A673 (cell line): ENCODE measurements at regions of chr10 and their contacts with region 1.

Region 1: DNA sequence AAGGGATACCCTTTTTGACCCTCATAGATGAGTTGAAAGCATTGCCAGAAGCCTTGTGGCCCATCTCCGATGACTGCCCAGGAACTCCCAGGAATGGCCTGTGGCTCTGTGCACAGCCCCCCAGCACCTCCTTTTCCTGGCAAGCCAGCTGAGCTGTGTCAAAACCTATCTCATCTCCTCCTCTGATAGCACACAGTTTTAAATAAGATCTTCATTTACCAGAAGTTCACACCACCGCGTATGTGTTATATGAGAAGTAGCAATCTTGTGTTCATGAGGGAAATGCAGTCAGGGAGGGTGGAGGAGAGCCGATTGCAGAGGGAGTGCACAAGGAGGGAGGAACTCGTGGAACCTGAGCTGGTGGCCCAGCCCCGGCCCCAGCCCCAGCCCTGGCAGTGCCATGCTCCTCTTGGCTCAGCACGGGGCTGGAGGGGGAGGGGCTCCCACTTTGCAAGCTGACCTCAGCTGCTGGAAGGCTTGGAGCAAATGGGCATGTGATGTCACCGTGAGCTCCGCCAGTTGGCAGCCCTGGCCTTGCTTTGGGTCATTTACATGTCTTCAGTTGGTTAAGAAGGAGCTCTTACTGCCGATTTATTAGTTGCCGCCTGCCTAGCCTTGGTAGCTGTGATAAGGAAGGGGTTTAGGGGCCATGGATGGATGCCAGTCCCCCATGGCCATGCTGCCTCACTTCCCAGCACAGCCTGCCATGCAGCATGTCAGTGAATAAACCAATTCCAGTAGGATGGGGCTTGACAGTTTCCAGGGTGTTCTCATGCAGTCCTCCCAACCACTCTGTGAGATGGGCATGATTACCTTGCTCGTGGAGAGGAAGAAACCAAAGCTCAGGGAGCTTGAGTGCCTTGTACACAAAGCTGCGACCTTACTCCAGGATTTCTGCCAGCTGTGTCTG is 20.0 kb downstream of the UNC5B start:
- DNase-seq: no peak
- H3K4me3 ChIP-seq: no peak overlapping the region
- H3K27ac ChIP-seq: no peak overlapping the region
- H3K4me1 ChIP-seq: peaks cover 27% of the 10 kb centered on the region
- H3K27me3 ChIP-seq: no peaks in the 10 kb centered on the region
- CTCF ChIP-seq: no peak

Region 2: DNA sequence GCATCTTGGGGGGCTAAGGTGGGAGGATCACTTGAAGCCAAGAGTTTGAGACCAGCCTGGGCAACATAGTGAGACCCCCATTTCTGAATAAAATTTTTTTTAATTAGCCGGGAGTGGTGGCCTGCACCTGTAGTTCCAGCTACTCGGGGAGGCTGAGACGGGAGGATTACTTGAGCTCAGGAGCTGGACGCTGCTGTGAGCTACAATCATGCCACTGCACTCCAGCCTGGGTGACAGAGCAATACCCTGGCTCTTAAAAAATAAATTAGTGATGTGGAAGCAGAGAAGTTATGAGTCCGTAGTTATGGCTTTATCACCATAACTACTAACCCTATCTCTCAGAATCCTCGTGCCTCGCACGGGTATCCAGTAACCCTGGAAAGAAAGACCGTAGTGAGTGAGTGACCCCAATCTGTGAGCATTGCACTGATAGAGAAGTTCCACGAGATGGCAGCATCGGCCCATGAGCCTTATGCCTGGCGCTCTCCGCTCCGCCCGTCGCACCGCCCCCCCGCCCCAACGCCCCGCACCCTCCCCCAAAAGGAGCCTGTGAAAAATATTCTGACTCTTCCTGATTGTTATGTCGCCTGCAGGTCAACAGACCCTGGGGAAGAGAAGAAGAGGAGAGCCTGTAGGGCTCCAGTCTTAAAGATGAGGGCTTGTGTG is 81.8 kb after region 1 on chr10:
- CTCF ChIA-PET with region 1: interaction called, 10 read pairs
- POLR2A ChIA-PET with region 1: no interaction called
- intact Hi-C with region 1: no loop called
- DNase-seq: peak; percentile 60
- H3K4me3 ChIP-seq: no peak overlapping the region
- H3K27ac ChIP-seq: no peak overlapping the region
- H3K4me1 ChIP-seq: peaks cover 8% of the 10 kb centered on the region
- H3K27me3 ChIP-seq: no peaks in the 10 kb centered on the region
- CTCF ChIP-seq: peak; percentile 66